Natural killer cell (primary cell): ENCODE measurements at regions of chr7 and their contacts with region 1.

Region 1: GRCh38 chr7:76133164-76133775 is 68.4 kb upstream of the SRRM3 start:
- DNase-seq: peak in 1 of 2 donors; percentile 28
- ATAC-seq: peak; percentile 64 to 70 (median 68)
- H3K4me3 ChIP-seq: no peak overlapping the region
- H3K4me3 Mint-ChIP-seq: peak overlapping the region; percentile 74
- H3K27ac ChIP-seq: no peak overlapping the region
- H3K27ac Mint-ChIP-seq: peak overlapping the region; percentile 87 to 93
- H3K4me1 ChIP-seq: peaks cover 11% of the 10 kb centered on the region
- H3K4me1 Mint-ChIP-seq: peaks cover 30 to 49% of the 10 kb centered on the region in 2 donors
- H3K27me3 ChIP-seq: no peaks in the 10 kb centered on the region
- H3K27me3 Mint-ChIP-seq: no peaks in the 10 kb centered on the region
- CTCF ChIP-seq: no peak

Region 2: DNA sequence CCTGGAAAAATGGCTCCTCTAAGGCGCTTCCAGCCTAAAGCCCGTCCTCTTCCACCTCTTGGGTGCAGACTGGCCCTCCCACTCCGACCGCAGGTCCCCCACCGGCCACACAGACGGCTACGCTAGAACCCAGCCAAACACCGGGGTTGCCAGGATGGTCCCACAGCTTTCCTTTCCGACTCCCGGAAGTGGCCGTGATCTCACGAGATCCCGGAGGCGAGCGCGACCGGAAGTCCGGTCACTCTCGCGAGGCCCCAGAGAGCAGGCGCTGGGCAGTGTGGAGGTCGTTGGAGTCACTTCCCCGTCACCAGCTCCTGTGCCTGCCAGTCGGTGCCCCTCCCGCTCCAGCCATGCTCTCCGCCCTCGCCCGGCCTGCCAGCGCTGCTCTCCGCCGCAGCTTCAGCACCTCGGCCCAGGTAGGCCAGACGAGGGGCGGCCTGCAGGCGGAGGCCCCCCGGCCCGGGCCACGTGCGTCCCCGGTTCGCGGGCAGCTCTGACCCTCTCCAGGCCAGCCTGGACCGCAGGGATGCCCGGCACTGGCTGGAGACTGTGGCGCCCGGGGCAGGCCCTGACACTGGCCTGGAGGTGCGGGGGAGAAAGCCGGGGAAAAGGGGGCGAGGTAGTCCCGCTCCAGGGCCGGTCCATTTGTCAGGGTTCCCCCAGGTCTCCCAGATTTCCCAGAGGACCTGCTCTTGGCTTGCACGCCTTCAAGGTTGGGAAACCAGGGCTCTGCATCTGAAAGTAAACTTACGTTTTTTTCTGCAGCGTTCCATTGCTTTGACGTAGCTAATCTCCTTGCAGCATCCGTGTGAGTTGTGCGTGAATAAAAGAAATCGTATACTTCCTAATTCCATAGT is 85.2 kb before region 1 on chr7 and contains the starts of genes MDH2 and STYXL1:
- intact Hi-C with region 1: loop called (anchors 5 kb)
- DNase-seq: peak; percentile 86 to 93
- ATAC-seq: peak; percentile 90 to 96 (median 93)
- H3K4me3 ChIP-seq: peak within 1 kb of the TSS; percentile 100
- H3K4me3 Mint-ChIP-seq: peak within 1 kb of the TSS; percentile 96
- H3K27ac ChIP-seq: peak within 1 kb of the TSS; percentile 94
- H3K27ac Mint-ChIP-seq: peak within 1 kb of the TSS; percentile 92 to 98
- H3K4me1 ChIP-seq: peaks cover 35% of the 10 kb centered on the region
- H3K4me1 Mint-ChIP-seq: peaks cover 31 to 58% of the 10 kb centered on the region in 2 donors
- H3K27me3 ChIP-seq: no peaks in the 10 kb centered on the region
- H3K27me3 Mint-ChIP-seq: no peaks in the 10 kb centered on the region
- CTCF ChIP-seq: no peak
- total RNA-seq, gene MDH2: 75.9 to 95.0 (median 93.9) TPM
- total RNA-seq, gene STYXL1: 15.1 to 33.2 (median 18.8) TPM

Region 3: DNA sequence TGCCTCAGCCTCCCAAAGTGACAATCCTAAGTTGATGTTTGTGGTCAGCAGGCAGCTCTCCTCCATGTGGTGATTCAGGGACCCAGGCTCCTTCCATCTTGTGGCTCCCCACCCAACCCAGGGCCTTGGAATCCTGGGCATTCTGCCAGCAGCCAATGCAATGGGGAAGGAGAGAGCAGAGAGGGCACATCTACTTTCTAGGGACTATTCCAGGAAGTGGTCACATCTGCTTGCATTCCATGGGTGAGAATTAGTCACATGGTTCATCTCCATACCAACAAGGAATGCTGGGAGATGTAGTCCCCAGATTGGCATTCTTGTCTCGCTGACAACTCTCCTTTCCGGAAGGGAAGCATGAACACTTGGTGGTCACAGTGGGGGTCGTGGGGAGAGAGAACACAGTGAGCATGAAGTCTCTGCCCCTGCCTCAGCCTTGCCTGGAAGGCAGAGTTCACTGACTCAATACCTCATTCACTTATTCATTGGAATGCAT is 58.6 kb after region 1 on chr7:
- intact Hi-C with region 1: no loop called
- DNase-seq: no peak
- ATAC-seq: no peak
- H3K4me3 ChIP-seq: no peak overlapping the region
- H3K4me3 Mint-ChIP-seq: no peak overlapping the region
- H3K27ac ChIP-seq: no peak overlapping the region
- H3K27ac Mint-ChIP-seq: no peak overlapping the region
- H3K4me1 ChIP-seq: no peaks in the 10 kb centered on the region
- H3K4me1 Mint-ChIP-seq: no peaks in the 10 kb centered on the region
- H3K27me3 ChIP-seq: no peaks in the 10 kb centered on the region
- H3K27me3 Mint-ChIP-seq: peaks cover 0 to 11% of the 10 kb centered on the region in 2 donors
- CTCF ChIP-seq: no peak